ENCODE measurements at regions of chr5 and their contacts with region 1.

Region 1: DNA sequence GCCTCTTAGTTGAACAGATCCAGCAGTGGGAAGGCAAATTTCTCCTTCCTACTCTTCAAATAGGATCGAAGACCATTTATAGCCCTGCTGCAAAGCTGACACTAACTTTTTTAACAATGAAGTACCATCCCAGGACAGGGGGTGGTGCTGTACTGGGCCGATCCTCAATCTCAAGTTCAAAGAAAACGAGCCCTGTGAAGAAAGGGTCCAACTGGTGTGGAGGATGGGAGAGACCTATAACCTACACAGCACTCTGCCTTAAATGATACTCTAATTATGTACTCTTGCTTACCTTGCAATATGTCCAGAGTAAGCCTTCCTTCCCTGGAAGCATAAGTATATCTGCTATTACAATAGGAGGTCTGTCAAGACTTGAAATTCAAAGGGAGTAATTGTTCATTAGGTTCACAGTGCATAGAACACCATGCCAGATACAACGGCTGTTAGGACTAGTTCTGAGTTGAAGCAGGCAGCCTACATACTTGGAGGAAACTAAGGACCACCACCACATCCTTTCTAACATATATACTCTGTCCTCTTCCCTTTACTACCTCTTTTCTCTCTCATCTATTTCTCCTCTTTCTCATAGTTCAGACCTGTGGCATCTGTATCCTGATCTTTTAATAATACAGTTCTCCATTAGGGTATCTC is 6.2 kb downstream of the ETF1 start:
- DNase-seq: no peak
- H3K4me3 ChIP-seq: no peak overlapping the region
- H3K27ac ChIP-seq: no peak overlapping the region
- H3K4me1 ChIP-seq: peaks cover 18% of the 10 kb centered on the region
- H3K27me3 ChIP-seq: no peaks in the 10 kb centered on the region
- CTCF ChIP-seq: peak; percentile 49 to 52

Region 2: DNA sequence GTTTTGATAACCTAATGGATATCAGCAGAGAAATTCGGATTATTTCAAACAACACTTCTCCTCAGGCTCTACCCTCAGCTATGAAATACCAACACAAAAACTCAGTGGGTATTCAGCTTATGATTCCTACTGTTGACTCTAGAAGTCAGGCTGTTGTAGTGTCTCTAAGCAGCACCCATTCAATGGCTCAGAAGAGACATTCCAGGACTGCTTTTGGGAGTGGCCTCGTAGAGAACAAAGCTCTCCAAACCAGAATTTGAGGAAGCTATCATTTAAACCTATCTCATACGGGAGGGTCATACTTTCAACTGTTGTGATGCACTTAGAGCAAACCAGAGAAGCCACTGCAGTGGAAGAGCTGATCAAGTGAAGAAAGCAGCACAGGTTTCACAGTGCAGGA is 27.8 kb before region 1 on chr5:
- CTCF ChIA-PET with region 1: interaction called, 24 read pairs
- dilution Hi-C with region 1: no loop called
- in situ Hi-C with region 1: no loop called
- intact Hi-C with region 1: loop called (anchors 5 kb)
- DNase-seq: no peak
- H3K4me3 ChIP-seq: no peak overlapping the region
- H3K27ac ChIP-seq: no peak overlapping the region
- H3K4me1 ChIP-seq: peaks cover 24% of the 10 kb centered on the region
- H3K27me3 ChIP-seq: no peaks in the 10 kb centered on the region
- CTCF ChIP-seq: no peak

Region 3: DNA sequence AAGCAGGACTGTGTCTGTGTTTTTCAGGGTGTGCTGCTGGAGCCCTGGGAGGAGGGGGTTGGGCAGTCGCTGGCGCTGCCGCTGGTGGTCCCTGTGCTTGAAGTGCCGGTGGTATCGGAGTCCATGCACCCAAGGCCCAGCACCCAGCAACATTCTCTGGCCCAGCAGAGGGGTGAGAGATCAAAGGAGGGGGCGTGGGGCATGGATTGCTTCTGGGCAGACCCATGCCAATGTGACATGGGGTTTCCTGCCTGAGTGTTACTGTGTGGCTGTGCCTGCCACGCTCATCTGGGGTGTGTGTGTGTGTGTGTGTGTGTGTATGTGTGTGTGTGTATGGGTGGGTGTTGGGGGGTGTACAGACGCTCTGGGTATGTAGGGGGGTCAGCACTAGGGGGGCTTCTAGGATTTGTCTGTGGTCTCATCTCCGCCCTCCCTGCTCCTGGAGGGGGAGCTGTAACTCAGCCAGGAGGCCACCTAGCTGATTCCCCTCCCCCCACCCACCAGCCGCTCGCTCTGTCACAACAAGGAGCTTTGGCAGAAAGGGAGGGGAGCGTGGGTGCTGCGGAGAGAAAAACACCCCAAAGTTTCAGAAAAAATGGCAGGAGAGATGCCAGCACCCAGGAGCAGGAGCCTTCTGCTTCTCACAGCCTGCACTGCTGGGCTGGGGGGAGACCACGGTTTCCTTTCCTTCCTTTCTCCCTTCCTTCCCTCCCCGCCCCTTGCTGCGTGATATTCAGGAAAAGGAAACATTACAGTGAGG is 74.3 kb after region 1 on chr5:
- CTCF ChIA-PET with region 1: no interaction called
- dilution Hi-C with region 1: no loop called
- in situ Hi-C with region 1: no loop called
- intact Hi-C with region 1: no loop called
- DNase-seq: no peak
- H3K4me3 ChIP-seq: no peak overlapping the region
- H3K27ac ChIP-seq: no peak overlapping the region
- H3K4me1 ChIP-seq: peaks cover 34% of the 10 kb centered on the region
- H3K27me3 ChIP-seq: no peaks in the 10 kb centered on the region
- CTCF ChIP-seq: no peak

Measured in mammary epithelial cell (primary cell).